ENCODE measurements at regions of chr9 and their contacts with region 1.

Region 1: DNA sequence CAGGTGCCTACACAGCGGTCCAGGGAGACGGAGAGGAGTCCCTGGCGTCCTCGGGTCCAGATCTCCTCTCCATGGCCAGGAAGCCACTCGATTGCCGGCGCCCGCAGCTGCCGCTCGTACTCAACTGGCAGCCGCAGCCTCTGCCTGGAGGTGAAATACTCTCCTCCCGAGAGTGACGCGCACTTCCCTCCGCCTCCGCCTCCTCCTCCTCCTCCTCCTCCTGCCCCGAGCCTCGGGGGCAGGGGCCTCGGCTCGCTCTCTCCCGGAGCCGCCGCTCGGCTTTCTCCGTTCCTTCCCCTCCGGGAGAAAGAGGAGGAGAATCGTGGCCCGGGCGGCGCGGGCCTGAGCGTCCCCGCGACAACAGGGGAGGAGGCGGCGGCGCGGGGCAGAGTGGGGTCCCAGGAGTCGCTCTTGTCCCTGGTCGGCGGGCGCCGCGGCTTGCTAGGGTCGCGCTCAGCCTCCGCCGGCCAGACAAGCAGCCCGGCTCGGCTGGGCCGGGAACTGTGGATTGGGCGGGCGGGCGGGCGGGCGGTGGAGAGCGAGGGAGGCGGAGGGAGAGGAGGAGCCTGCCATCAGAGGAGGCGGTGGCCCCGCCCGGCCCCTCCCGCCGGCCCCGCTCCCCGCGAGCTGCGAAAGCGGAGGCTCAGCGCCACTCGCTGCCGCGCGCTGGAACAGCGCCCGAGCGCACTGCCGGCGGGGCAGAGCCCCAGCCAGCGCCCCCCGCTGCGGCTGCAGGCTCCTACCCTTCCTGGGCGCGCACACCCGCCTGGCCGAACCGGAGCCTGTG is at the start of gene CEMIP2:
- DNase-seq: peak; percentile 97
- total RNA-seq, gene CEMIP2: 11.2 TPM

Region 2: GRCh38 chr9:71604197-71605063 is 164.2 kb before region 1 on chr9:
- intact Hi-C with region 1: loop called (anchors 2 kb)
- DNase-seq: peak; percentile 87

Region 3: DNA sequence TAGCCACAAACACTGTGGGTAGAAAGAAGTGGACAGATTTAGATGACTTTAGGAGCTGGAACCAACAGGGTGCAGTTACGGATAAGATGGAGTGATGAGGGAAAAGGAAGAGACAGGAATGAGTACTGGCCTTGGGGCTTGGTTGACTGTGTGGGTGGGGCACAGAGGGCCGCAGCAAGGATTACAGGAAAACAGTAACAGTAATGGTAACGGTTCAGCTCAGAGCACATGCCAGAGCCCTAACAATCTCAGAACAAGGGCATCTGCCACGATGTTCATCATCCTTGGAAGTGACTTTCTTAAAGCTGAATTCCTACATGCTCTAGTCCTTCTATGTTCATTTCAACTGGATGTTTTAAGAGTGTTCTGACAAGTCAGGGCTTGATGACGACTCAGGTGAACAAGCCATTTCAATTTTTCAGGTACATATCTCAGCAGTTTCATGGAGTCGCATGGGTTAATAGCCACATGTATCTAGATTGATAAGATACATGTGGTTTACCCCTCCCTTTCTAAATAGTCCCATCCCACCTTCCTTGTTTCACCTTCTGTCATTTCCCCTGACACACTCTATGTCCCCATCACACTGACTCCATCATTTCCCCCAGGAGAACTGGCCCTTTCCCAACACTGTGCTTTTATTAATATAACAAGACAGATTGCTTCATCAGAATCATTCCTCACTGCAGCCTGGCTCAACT is 65.3 kb before region 1 on chr9:
- intact Hi-C with region 1: loop called (anchors 10 kb)
- DNase-seq: no peak

Region 4: GRCh38 chr9:71748280-71748743 is 20.3 kb before region 1 on chr9:
- intact Hi-C with region 1: no loop called
- DNase-seq: no peak

Region 5: DNA sequence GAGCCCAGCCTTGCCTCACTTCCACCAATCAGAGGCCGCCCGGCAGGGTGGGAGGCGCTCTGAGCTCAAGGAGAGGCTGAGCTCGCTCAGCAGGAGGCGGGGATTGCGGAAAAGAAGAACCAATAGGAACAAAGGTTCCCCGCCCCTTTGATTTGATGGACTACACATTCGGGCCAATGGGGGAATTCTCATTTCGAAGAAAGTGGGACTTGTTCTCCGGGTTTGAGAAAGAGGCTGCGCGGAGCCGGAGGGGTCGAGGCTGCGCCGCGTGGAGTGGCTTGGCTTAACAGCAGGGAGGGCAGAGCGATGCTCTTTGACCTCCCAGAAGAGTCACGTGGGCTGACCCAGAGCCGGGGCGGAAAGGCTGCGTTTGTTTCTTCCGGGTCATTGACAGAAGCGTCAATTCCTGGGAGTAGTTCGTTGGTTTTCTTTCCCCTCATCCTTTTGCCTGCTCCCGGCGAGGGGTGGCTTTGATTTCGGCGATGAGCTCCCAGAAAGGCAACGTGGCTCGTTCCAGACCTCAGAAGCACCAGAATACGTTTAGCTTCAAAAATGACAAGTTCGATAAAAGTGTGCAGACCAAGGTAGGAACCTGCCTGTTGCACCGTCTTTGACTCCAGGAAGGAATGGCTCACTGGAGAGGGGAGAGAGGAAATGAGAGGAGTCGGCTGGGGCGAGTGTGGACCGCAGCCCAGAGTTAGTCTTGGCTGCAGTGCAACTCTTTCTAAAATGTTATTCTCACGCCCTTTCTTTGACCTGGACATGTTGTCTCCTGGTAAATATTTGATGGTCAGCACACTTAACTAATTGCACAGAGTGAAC is 142.9 kb after region 1 on chr9 and contains the start of gene C9orf85:
- intact Hi-C with region 1: loop called (anchors 5 kb)
- DNase-seq: no peak
- total RNA-seq, gene C9orf85: 6.2 TPM